GM12878 (cell line): ENCODE measurements at regions of chrX and their contacts with region 1.

Region 1: GRCh38 chrX:23493941-23494374 is 159.3 kb downstream of the PTCHD1 start:
- DNase-seq: no peak
- ATAC-seq: peak; percentile 80
- H3K4me3 ChIP-seq: no peak overlapping the region
- H3K27ac ChIP-seq: no peak overlapping the region
- H3K4me1 ChIP-seq: no peaks in the 10 kb centered on the region
- H3K27me3 ChIP-seq: no peaks in the 10 kb centered on the region
- CTCF ChIP-seq: no peak
- EP300 ChIP-seq: no peak
- POLR2A ChIP-seq: no peak
- RAD21 ChIP-seq: no peak

Region 2: GRCh38 chrX:22748093-22748999 is 745.6 kb before region 1 on chrX:
- CTCF ChIA-PET with region 1: no interaction called
- POLR2A ChIA-PET with region 1: no interaction called
- RAD21 ChIA-PET with region 1: no interaction called
- SMC1A ChIA-PET with region 1: no interaction called
- in situ Hi-C with region 1: no loop called
- intact Hi-C with region 1: no loop called
- DNase-seq: no peak
- ATAC-seq: peak; percentile 96
- H3K4me3 ChIP-seq: no peak overlapping the region
- H3K27ac ChIP-seq: no peak overlapping the region
- H3K4me1 ChIP-seq: no peaks in the 10 kb centered on the region
- H3K27me3 ChIP-seq: no peaks in the 10 kb centered on the region
- CTCF ChIP-seq: peak; percentile 67 to 82 (median 80)
- EP300 ChIP-seq: no peak
- POLR2A ChIP-seq: no peak
- RAD21 ChIP-seq: peak; percentile 52

Region 3: DNA sequence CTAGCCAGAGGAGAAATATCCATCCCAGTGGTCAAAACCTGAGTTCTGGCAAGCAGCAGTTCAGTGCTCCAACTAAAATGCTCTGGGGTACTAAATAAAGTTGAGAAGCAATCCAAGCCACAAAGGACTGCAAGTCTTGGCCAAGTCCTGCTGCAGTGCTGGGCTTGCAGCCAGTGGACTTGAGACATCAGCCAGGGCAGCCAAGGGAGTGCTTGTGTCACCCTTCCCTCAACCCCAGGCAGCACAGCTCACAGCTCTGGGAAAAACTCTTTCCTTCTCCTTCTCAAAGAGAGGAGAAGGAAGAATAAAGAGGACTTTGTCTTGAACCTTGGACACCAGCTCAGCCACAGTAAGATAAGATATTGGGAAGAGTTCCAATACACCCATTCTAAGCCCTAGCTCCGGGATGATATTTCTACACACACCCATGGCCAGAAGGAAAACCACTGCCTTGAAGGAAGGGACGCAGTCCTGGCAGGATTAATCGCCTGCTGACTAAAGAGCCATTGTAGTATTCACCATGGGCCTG is 59.5 kb before region 1 on chrX:
- CTCF ChIA-PET with region 1: no interaction called
- POLR2A ChIA-PET with region 1: no interaction called
- RAD21 ChIA-PET with region 1: no interaction called
- SMC1A ChIA-PET with region 1: no interaction called
- in situ Hi-C with region 1: no loop called
- intact Hi-C with region 1: no loop called
- DNase-seq: no peak
- ATAC-seq: no peak
- H3K4me3 ChIP-seq: no peak overlapping the region
- H3K27ac ChIP-seq: no peak overlapping the region
- H3K4me1 ChIP-seq: no peaks in the 10 kb centered on the region
- H3K27me3 ChIP-seq: no peaks in the 10 kb centered on the region
- CTCF ChIP-seq: no peak
- EP300 ChIP-seq: no peak
- POLR2A ChIP-seq: no peak
- RAD21 ChIP-seq: no peak

Region 4: GRCh38 chrX:23667239-23668177 is 173.6 kb after region 1 on chrX and contains the start of gene PRDX4:
- CTCF ChIA-PET with region 1: no interaction called
- POLR2A ChIA-PET with region 1: no interaction called
- RAD21 ChIA-PET with region 1: no interaction called
- SMC1A ChIA-PET with region 1: no interaction called
- in situ Hi-C with region 1: no loop called
- intact Hi-C with region 1: loop called (anchors 10 kb)
- DNase-seq: peak; percentile 56
- ATAC-seq: peak; percentile 83
- H3K4me3 ChIP-seq: peak within 1 kb of the TSS; percentile 71
- H3K27ac ChIP-seq: peak within 1 kb of the TSS; percentile 87
- H3K4me1 ChIP-seq: peaks cover under 1% of the 10 kb centered on the region; the same call in 1 of the 2 replicates
- H3K27me3 ChIP-seq: no peaks in the 10 kb centered on the region
- CTCF ChIP-seq: no peak
- EP300 ChIP-seq: no peak
- POLR2A ChIP-seq: peak; percentile 95
- RAD21 ChIP-seq: no peak
- polyA plus RNA-seq, gene PRDX4: 11.1 to 28.4 TPM